HEK293T (cell line): ENCODE measurements at regions of chr15 and their contacts with region 1.

Region 1: GRCh38 chr15:51878446-51879386 is 49.3 kb downstream of the TMOD3 start:
- DNase-seq: no peak

Region 2: GRCh38 chr15:51622604-51623370 is 255.9 kb before region 1 on chr15 and contains the start of gene DMXL2:
- CTCF ChIA-PET with region 1: interaction called, 10 read pairs
- POLR2A ChIA-PET with region 1: interaction called, 3 read pairs
- DNase-seq: peak; percentile 80

Region 3: DNA sequence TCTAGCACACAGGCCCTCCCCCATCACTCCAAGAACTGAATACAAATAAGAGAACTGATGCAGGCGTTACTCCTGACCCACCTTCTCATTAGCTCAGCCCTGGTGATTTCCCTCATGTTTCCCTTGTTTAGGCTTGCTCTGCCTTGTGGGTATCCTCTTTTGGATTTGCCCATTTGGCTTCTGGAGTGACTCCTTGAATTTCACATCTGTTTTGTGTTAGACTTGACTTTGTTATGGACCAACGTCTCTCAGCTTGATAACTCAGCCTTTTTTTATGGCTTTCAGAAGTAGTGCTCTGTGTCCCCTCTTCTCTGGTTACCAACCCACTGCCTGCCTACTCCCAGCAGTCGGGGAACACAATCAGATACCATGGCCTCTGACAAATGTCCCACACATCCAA is 60.6 kb before region 1 on chr15:
- CTCF ChIA-PET with region 1: no interaction called
- POLR2A ChIA-PET with region 1: no interaction called
- DNase-seq: no peak